Activated CD4-positive, alpha-beta T cell treated with anti-CD3 and anti-CD28 coated beads, Interleukin-2, amount 10 ng/mL, durations not matched to agents 24 days and 14 days (primary cell): ENCODE measurements at regions of chr13 and their contacts with region 1.

Region 1: GRCh38 chr13:52450012-52450792 is at the start of gene VPS36:
- DNase-seq: peak; percentile 99
- H3K4me3 Mint-ChIP-seq: peak within 1 kb of the TSS; percentile 93
- H3K27ac Mint-ChIP-seq: peak within 1 kb of the TSS; percentile 92
- H3K4me1 Mint-ChIP-seq: peaks cover 33% of the 10 kb centered on the region
- H3K27me3 Mint-ChIP-seq: no peaks in the 10 kb centered on the region
- total RNA-seq, gene VPS36: 42.0 and 43.0 TPM in 2 replicates

Region 2: DNA sequence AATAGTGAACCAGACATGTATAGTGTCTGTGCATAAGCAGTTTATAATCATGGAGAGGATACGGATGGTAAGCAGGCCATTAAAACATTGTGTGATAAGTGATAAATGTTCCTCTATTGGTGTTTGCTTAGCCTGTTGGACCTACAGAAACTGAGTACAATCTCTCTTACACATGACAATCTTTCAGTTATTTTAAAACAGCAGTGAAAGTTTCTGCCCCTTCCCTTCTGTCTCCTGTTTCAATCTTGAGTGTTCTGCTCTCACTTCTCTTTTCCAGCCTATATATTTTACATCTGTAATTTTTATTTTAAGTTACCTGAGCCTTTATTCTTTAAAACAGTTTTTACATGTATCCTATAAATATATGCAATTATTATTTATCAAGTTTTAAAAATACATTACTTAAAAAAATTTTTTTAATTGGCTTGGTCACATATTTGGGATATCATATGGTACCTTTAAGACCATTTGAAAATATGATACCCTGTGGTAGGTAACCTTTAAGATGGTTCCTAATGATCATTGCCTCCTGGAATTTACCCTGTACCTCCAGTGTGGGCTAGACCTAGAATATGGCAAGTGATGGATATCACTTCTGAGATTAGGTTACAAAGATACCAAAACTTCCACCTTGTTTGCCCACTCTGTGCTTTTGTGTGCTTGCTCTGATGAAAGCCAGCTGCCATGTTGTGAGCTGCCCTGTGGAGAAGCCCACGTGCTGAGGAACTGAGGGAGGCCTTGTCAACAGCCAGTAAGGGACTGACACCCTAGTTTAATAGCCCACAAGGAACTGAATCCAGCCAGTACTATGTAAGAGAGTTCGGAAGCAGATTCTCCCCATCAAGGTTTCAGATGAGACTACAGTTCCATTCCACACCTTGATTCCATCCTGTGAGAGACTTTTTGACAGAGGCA is 745.5 kb before region 1 on chr13:
- intact Hi-C with region 1: no loop called
- DNase-seq: no peak
- H3K4me3 Mint-ChIP-seq: no peak overlapping the region
- H3K27ac Mint-ChIP-seq: peak overlapping the region; percentile 19
- H3K4me1 Mint-ChIP-seq: no peaks in the 10 kb centered on the region
- H3K27me3 Mint-ChIP-seq: no peaks in the 10 kb centered on the region

Region 3: DNA sequence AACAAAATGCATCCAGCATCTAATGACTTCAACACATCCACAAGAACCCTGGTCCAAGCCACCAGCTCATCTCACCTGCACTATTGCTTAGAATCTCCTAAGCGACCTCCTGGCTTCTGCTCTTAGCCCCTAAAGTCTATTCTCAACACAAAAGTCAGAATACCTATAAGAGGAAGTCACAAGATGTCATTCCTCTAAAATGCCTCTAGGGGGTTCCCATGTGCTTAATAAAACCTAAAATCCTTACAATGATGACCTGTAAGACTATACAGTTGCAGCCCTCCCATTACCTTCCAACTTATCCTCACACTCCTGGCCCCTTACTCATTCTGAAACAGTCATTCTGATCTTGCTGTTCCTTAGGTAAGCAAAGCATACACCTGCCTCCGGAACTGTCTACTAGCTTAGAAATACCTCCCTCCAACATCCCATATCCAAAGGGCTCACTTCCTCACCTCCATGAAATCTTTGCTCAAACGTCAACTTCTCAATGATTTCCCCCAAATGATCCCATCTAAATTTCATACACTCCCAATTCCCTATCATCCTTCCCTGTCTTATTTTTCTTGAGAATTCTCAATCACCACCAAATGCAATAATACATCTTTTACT is 449.0 kb before region 1 on chr13:
- intact Hi-C with region 1: loop called (anchors 1 kb)
- DNase-seq: peak; percentile 62
- H3K4me3 Mint-ChIP-seq: no peak overlapping the region
- H3K27ac Mint-ChIP-seq: no peak overlapping the region
- H3K4me1 Mint-ChIP-seq: no peaks in the 10 kb centered on the region
- H3K27me3 Mint-ChIP-seq: peaks cover 18% of the 10 kb centered on the region

Region 4: GRCh38 chr13:52348071-52348470 is 102.1 kb before region 1 on chr13:
- intact Hi-C with region 1: loop called (anchors 1 kb)
- DNase-seq: no peak
- H3K4me3 Mint-ChIP-seq: no peak overlapping the region
- H3K27ac Mint-ChIP-seq: no peak overlapping the region
- H3K4me1 Mint-ChIP-seq: no peaks in the 10 kb centered on the region
- H3K27me3 Mint-ChIP-seq: peaks cover 13% of the 10 kb centered on the region

Region 5: GRCh38 chr13:52617070-52618060 is 167.2 kb after region 1 on chr13:
- intact Hi-C with region 1: loop called (anchors 1 kb)
- DNase-seq: peak; percentile 95
- H3K4me3 Mint-ChIP-seq: peak overlapping the region; percentile 94
- H3K27ac Mint-ChIP-seq: peak overlapping the region; percentile 94
- H3K4me1 Mint-ChIP-seq: peaks cover 14% of the 10 kb centered on the region
- H3K27me3 Mint-ChIP-seq: peaks cover 9% of the 10 kb centered on the region

Region 6: GRCh38 chr13:52884429-52885010 is 434.3 kb after region 1 on chr13:
- intact Hi-C with region 1: no loop called
- DNase-seq: no peak
- H3K4me3 Mint-ChIP-seq: no peak overlapping the region
- H3K27ac Mint-ChIP-seq: no peak overlapping the region
- H3K4me1 Mint-ChIP-seq: no peaks in the 10 kb centered on the region
- H3K27me3 Mint-ChIP-seq: no peaks in the 10 kb centered on the region